K562 (cell line): ENCODE measurements at regions of chr6 and their contacts with region 1.

Region 1: DNA sequence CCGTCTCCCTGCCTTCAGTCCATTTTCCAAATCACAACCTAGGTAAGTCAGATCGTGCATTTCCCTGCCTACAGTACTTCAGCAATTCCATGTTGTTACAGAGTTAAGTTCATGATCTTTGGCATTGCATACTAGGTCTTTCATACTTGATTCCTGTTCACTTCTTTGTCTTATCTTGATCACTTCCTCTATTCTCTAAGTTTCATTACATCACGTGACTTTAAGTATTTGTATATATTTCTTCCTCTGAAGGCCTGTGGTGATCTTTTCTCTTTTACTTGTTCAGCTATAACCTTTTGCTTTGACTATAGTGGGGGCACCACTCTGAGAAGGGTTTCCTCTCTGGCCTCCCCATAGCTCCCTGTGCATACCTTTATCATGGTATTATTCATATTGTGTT is 100.2 kb downstream of the TRMT11 start:
- DNase-seq: no peak
- ATAC-seq: no peak
- H3K4me3 ChIP-seq: no peak overlapping the region
- H3K27ac ChIP-seq: no peak overlapping the region
- H3K4me1 ChIP-seq: no peaks in the 10 kb centered on the region; a peak in 2 of 5 replicates
- H3K27me3 ChIP-seq: no peaks in the 10 kb centered on the region
- CTCF ChIP-seq: no peak
- EP300 ChIP-seq: no peak
- POLR2A ChIP-seq: no peak
- RAD21 ChIP-seq: no peak

Region 2: DNA sequence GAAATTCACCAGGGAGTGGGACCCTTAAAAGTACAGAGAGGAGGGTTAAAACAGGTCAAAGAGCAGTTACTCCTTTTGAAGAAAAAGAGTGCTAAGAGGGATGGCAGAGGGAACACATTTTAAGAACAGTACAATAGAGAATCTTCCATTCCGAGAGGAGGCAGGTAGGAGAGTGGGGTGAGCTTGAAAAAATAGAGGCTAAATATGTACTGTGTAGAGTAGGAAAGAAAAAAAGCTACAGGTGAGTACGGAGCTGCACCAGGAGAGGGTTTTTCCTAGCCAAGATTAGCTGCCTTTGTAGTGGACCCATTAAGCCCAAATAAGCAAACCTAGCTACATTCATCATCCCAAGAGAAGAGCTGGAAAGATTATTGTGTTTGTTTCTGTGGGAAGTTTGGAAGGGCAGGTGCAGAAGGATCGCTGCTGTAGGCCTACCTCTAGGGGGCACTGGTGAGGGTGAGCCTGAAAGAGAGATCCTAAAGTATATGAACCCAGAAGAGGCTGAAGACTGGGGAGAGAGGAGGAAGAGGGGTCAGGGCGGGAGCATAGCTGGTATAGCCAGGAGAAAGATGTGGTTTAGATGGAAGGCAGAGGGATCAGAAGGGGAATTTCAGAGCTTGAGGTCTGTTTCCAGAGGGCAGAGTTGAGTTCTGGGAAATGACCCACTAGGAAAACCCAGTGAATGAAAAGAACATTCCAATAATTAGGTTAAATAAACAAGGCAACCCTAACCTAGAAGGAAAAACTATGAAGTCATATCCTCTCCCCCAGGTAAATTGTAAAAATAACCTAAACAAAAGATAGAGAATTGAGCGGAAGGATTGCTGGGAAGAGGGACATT is 180.2 kb before region 1 on chr6:
- CTCF ChIA-PET with region 1: no interaction called
- POLR2A ChIA-PET with region 1: no interaction called
- in situ Hi-C with region 1: no loop called
- intact Hi-C with region 1: no loop called
- DNase-seq: peak; percentile 70 to 80 (median 76)
- ATAC-seq: peak; percentile 91
- H3K4me3 ChIP-seq: no peak overlapping the region
- H3K27ac ChIP-seq: no peak overlapping the region
- H3K4me1 ChIP-seq: peaks cover 5 to 6% of the 10 kb centered on the region in 2 experiments; a peak in 3 of 5 replicates
- H3K27me3 ChIP-seq: no peaks in the 10 kb centered on the region
- CTCF ChIP-seq: peak; percentile 79 to 92 (median 84)
- EP300 ChIP-seq: no peak
- POLR2A ChIP-seq: no peak
- RAD21 ChIP-seq: peak; percentile 57 to 66

Region 3: DNA sequence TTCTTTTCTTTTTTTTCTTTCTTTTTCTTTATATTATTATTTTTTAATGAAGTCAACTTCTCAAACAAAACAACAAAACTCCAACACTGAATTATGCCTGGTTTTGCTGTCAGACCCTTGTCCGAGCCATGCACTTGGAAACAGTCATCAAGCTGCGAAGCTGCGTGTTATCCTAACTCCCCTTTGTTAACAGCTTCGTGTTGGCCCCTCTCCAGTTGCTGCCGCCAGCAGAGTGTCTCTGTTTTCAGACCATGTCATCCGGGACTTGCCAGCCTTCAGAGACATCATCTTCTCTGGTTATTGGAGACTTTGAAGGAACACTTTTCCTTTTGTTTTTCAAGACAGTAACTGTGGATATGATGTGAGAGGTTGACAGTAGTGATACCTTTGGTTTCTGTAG is 17.1 kb before region 1 on chr6:
- CTCF ChIA-PET with region 1: no interaction called
- POLR2A ChIA-PET with region 1: interaction called, 4 read pairs
- in situ Hi-C with region 1: no loop called
- intact Hi-C with region 1: loop called (anchors 1 kb)
- DNase-seq: peak in 1 of 4 experiments; percentile 39
- ATAC-seq: peak; percentile 21; the same call in 2 of the 3 replicates
- H3K4me3 ChIP-seq: no peak overlapping the region
- H3K27ac ChIP-seq: no peak overlapping the region
- H3K4me1 ChIP-seq: peaks cover 10 to 35% of the 10 kb centered on the region in 2 experiments
- H3K27me3 ChIP-seq: no peaks in the 10 kb centered on the region
- CTCF ChIP-seq: no peak
- EP300 ChIP-seq: no peak
- POLR2A ChIP-seq: no peak
- RAD21 ChIP-seq: no peak